ENCODE measurements at regions of chr1 and their contacts with region 1.

Region 1: DNA sequence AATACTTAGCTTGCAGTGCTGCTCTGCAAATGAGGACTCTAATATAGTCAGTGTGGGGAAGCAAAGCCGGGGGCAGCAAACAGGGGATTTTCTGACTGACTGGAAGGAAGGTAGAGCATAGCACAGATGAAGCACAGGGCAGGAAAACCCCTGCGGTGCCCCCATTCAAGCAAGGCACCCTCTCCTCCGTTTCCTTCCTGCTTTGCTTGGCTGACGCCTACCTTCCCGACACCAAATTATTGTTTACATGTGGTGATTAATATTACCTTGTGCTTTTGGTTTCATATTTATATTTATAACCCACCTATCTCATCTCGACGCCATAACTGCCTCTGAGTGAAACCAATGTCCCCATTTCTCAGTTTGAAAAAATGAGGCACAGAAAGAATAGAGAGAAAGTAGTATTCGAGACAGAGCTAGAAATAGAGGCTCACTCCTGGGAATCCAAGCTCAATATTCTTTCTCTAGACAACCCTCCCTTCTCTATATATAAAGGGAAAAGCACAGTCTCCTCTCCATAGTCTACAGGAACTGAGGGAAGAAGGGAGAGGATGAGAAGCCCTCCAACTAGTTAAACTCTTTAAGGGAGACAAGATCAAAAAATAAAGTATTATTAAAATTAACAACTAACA is 41.3 kb downstream of the PIK3C2B start:
- DNase-seq: peak; percentile 94
- ATAC-seq: peak; percentile 90
- H3K4me3 ChIP-seq: peak overlapping the region in 3 of 5 experiments; percentile 19 to 58 (median 25)
- H3K4me3 Mint-ChIP-seq: peak overlapping the region; percentile 74
- H3K27ac ChIP-seq: peak overlapping the region; percentile 96
- H3K27ac Mint-ChIP-seq: peak overlapping the region; percentile 84
- H3K4me1 ChIP-seq: peaks cover 83 to 90% of the 10 kb centered on the region in 2 donors
- H3K4me1 Mint-ChIP-seq: peaks cover 90% of the 10 kb centered on the region
- H3K27me3 ChIP-seq: no peaks in the 10 kb centered on the region
- H3K27me3 Mint-ChIP-seq: no peaks in the 10 kb centered on the region
- CTCF ChIP-seq: no peak

Region 2: GRCh38 chr1:204417231-204417997 is 35.8 kb before region 1 on chr1:
- CTCF ChIA-PET with region 1: interaction called, 4 read pairs
- POLR2A ChIA-PET with region 1: interaction called, 3 read pairs
- intact Hi-C with region 1: loop called (anchors 5 kb)
- DNase-seq: no peak
- ATAC-seq: no peak
- H3K4me3 ChIP-seq: no peak overlapping the region
- H3K4me3 Mint-ChIP-seq: peak overlapping the region; percentile 60
- H3K27ac ChIP-seq: peak overlapping the region in 1 of 2 donors; percentile 37
- H3K27ac Mint-ChIP-seq: peak overlapping the region; percentile 83
- H3K4me1 ChIP-seq: peaks cover 25 to 29% of the 10 kb centered on the region in 2 donors
- H3K4me1 Mint-ChIP-seq: peaks cover 44% of the 10 kb centered on the region
- H3K27me3 ChIP-seq: no peaks in the 10 kb centered on the region
- H3K27me3 Mint-ChIP-seq: no peaks in the 10 kb centered on the region
- CTCF ChIP-seq: no peak

Region 3: DNA sequence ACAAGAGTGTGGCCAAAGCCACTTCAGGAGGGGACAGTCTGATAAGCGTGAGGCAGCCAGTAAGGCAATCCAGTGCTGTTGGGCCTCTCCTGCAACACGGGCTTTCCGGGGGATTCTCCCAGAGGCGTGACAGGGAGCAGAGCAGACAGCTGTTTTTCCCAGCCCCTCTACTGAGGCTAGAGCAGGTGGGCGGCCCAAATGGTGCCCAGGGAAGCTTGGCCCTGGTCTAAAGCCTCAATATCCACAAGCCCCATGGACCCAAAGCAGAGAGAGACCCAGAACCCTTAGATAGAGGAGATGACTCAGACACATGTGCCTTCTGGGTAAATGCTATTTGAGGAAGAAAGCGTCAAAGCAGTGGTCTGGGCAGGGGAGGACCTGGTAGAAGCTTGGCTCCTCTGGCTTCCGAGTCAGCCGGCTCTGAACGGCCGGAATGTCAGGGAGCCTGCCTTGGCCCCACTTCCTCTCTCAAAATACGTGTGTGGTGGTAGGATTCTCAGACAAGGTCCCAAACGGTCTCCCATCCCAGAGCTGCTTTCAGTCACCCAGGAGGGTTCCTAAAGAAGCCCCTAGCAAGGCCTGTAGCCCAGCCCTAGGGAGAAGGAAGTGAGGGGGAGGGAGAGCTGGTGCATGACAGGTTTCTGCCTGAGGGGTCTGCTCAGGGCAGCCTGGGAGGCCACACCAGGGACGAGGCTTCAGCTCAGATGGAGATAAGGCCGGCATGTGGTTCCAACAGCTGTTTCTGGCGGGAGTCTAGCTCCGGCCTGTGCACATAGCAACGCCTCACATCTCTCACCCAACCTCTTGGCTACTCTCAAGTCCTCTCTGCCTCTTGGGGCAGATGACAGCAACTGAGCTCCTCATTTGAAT is 12.5 kb after region 1 on chr1:
- CTCF ChIA-PET with region 1: interaction called, 67 read pairs
- POLR2A ChIA-PET with region 1: interaction called, 10 read pairs
- intact Hi-C with region 1: loop called (anchors 1 kb)
- DNase-seq: peak; percentile 57
- ATAC-seq: peak; percentile 49
- H3K4me3 ChIP-seq: peak overlapping the region in 1 of 5 experiments; percentile 2
- H3K4me3 Mint-ChIP-seq: peak overlapping the region; percentile 80
- H3K27ac ChIP-seq: peak overlapping the region; percentile 57 to 72
- H3K27ac Mint-ChIP-seq: peak overlapping the region; percentile 95
- H3K4me1 ChIP-seq: peaks cover 77 to 80% of the 10 kb centered on the region in 2 donors
- H3K4me1 Mint-ChIP-seq: peaks cover 84% of the 10 kb centered on the region
- H3K27me3 ChIP-seq: no peaks in the 10 kb centered on the region
- H3K27me3 Mint-ChIP-seq: no peaks in the 10 kb centered on the region
- CTCF ChIP-seq: no peak

Region 4: DNA sequence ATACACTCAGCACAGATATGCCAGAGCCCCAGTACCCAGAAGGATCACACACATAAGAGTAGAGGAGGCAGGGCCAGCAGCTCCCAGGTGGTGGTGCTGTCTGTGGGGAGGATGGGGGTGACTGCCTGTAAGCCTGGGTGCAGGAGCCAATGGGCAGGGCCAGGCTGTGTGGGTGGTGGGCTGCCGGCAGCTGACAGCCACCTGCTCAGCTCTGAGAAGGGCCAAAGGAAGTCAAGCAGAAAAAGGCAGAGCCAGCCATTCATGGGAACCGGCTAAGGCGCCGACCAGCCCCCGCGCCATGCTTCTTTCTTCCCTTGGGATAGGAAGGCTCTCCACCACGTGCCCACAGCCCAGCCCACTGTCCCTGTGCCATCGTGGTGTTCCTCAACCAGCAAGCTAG is 27.3 kb after region 1 on chr1:
- CTCF ChIA-PET with region 1: interaction called, 181 read pairs
- POLR2A ChIA-PET with region 1: interaction called, 8 read pairs
- intact Hi-C with region 1: loop called (anchors 2 kb)
- DNase-seq: peak; percentile 73
- ATAC-seq: peak; percentile 53
- H3K4me3 ChIP-seq: peak overlapping the region in 3 of 5 experiments; percentile 26 to 32 (median 32)
- H3K4me3 Mint-ChIP-seq: peak overlapping the region; percentile 71
- H3K27ac ChIP-seq: peak overlapping the region; percentile 78 to 95
- H3K27ac Mint-ChIP-seq: peak overlapping the region; percentile 98
- H3K4me1 ChIP-seq: peaks cover 93 to 94% of the 10 kb centered on the region in 2 donors
- H3K4me1 Mint-ChIP-seq: peaks cover 94% of the 10 kb centered on the region
- H3K27me3 ChIP-seq: no peaks in the 10 kb centered on the region
- H3K27me3 Mint-ChIP-seq: no peaks in the 10 kb centered on the region
- CTCF ChIP-seq: no peak

Region 5: GRCh38 chr1:204494281-204495077 is 41.2 kb after region 1 on chr1 and contains the start of gene PIK3C2B:
- CTCF ChIA-PET with region 1: interaction called, 1,884 read pairs
- POLR2A ChIA-PET with region 1: interaction called, 161 read pairs
- intact Hi-C with region 1: loop called (anchors 1 kb)
- DNase-seq: peak; percentile 87
- ATAC-seq: peak; percentile 81
- H3K4me3 ChIP-seq: peak within 1 kb of the TSS; percentile 84 to 98 (median 92)
- H3K4me3 Mint-ChIP-seq: peak within 1 kb of the TSS; percentile 97
- H3K27ac ChIP-seq: peak within 1 kb of the TSS; percentile 78 to 79
- H3K27ac Mint-ChIP-seq: peak within 1 kb of the TSS; percentile 96
- H3K4me1 ChIP-seq: peaks cover 73 to 88% of the 10 kb centered on the region in 2 donors
- H3K4me1 Mint-ChIP-seq: peaks cover 80% of the 10 kb centered on the region
- H3K27me3 ChIP-seq: no peaks in the 10 kb centered on the region
- H3K27me3 Mint-ChIP-seq: no peaks in the 10 kb centered on the region
- CTCF ChIP-seq: peak; percentile 61
- total RNA-seq, gene PIK3C2B: 90.3 and 93.7 TPM in 2 replicates

Region 6: GRCh38 chr1:204523605-204524215 is 70.5 kb after region 1 on chr1:
- CTCF ChIA-PET with region 1: interaction called, 4 read pairs
- POLR2A ChIA-PET with region 1: interaction called, 11 read pairs
- intact Hi-C with region 1: no loop called
- DNase-seq: peak; percentile 48
- ATAC-seq: peak; percentile 19
- H3K4me3 ChIP-seq: peak overlapping the region in 1 of 5 experiments; percentile 6
- H3K4me3 Mint-ChIP-seq: peak overlapping the region; percentile 62
- H3K27ac ChIP-seq: peak overlapping the region in 1 of 2 donors; percentile 67
- H3K27ac Mint-ChIP-seq: peak overlapping the region; percentile 89
- H3K4me1 ChIP-seq: peaks cover 59 to 65% of the 10 kb centered on the region in 2 donors
- H3K4me1 Mint-ChIP-seq: peaks cover 50% of the 10 kb centered on the region
- H3K27me3 ChIP-seq: no peaks in the 10 kb centered on the region
- H3K27me3 Mint-ChIP-seq: no peaks in the 10 kb centered on the region
- CTCF ChIP-seq: no peak

Measured in B cell (primary cell).